Activated CD8-positive, alpha-beta T cell treated with anti-CD3 and anti-CD28 coated beads, Interleukin-2, amount 10 ng/mL, durations not matched to agents 7 days and 5 days (primary cell): ENCODE measurements at regions of chr4 and their contacts with region 1.

Region 1: DNA sequence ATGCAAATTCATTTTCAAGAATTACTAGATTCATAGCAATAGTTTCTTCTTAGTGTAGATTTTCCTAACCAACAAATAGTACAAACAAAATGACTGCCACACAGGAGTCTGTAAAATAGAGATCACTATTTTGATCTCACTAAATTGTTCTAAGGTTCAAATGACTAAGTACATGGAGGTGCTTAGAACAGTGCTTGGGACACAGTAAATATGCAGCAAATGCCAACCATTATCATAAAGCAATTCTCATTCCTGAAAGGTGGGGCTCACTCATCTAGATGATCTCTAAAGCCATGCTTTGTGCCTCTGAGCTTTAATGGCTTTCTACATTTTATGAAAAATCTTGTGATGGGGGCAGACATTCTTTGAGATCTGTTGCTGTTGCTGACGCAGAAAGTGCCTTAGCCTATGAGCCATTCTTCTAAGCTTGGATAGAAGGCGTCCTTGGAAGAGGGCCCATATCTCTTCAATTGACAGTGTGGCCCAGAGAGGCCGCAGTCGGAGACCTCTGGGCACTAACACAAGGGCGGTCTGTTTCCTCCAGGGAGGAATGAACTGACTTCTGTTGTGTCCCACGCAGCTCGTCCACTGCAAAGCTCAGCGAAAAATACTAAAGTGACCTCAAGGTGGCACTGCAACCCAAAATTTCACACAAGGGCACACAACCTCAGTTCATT is 23.5 kb downstream of the TLR10 start:
- DNase-seq: peak; percentile 77
- ATAC-seq: peak; percentile 86
- H3K4me3 Mint-ChIP-seq: no peak overlapping the region
- H3K27ac Mint-ChIP-seq: no peak overlapping the region
- H3K4me1 Mint-ChIP-seq: peaks cover 25% of the 10 kb centered on the region
- H3K27me3 Mint-ChIP-seq: no peaks in the 10 kb centered on the region

Region 2: GRCh38 chr4:38782452-38783108 is 23.3 kb after region 1 on chr4 and contains the start of gene TLR10:
- CTCF ChIA-PET with region 1: interaction called, 99 read pairs
- POLR2A ChIA-PET with region 1: interaction called, 6 read pairs
- DNase-seq: peak; percentile 64
- ATAC-seq: peak; percentile 47
- H3K4me3 Mint-ChIP-seq: no peak within 1 kb of the TSS
- H3K27ac Mint-ChIP-seq: no peak within 1 kb of the TSS
- H3K4me1 Mint-ChIP-seq: peaks cover 6% of the 10 kb centered on the region
- H3K27me3 Mint-ChIP-seq: peaks cover 5% of the 10 kb centered on the region
- total RNA-seq, gene TLR10: 0.08 TPM in 1 of 2 experiments, not detected in the other

Region 3: GRCh38 chr4:38804654-38805295 is 45.5 kb after region 1 on chr4 and contains the start of gene TLR1:
- CTCF ChIA-PET with region 1: interaction called, 72 read pairs
- POLR2A ChIA-PET with region 1: interaction called, 4 read pairs
- DNase-seq: peak; percentile 32
- ATAC-seq: peak; percentile 78
- H3K4me3 Mint-ChIP-seq: peak within 1 kb of the TSS; percentile 76
- H3K27ac Mint-ChIP-seq: peak within 1 kb of the TSS; percentile 84
- H3K4me1 Mint-ChIP-seq: peaks cover 25% of the 10 kb centered on the region
- H3K27me3 Mint-ChIP-seq: no peaks in the 10 kb centered on the region
- total RNA-seq, gene TLR1: 8.1 to 9.6 TPM

Region 4: GRCh38 chr4:38856524-38857337 is 97.5 kb after region 1 on chr4 and contains the start of gene TLR6:
- CTCF ChIA-PET with region 1: interaction called, 90 read pairs
- POLR2A ChIA-PET with region 1: interaction called, 3 read pairs
- DNase-seq: peak; percentile 88
- ATAC-seq: peak; percentile 56
- H3K4me3 Mint-ChIP-seq: peak within 1 kb of the TSS; percentile 83
- H3K27ac Mint-ChIP-seq: peak within 1 kb of the TSS; percentile 95
- H3K4me1 Mint-ChIP-seq: peaks cover 42% of the 10 kb centered on the region
- H3K27me3 Mint-ChIP-seq: peaks cover 5% of the 10 kb centered on the region
- total RNA-seq, gene TLR6: 3.1 to 3.2 TPM

Region 5: DNA sequence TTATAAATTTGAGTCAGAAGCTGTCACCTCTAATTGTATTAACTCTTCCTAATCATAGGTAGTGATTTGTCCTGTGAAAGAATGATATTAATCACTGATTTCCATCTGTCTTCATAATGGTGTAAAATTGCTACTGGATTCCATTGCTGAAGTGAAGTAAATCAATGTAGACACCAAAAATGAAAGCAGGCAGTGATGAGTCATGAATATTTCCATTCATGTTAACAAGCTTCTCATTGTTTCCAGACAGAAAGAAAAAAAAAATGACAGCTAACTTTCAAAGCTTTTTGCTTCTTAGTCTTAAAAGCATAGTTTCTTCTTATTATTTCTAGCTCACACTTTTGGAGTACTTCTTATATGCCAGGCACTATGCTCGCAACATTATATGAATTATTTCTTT is 129.9 kb after region 1 on chr4:
- CTCF ChIA-PET with region 1: interaction called, 19 read pairs
- POLR2A ChIA-PET with region 1: no interaction called
- DNase-seq: no peak
- ATAC-seq: peak; percentile 60
- H3K4me3 Mint-ChIP-seq: peak overlapping the region; percentile 16
- H3K27ac Mint-ChIP-seq: peak overlapping the region; percentile 33
- H3K4me1 Mint-ChIP-seq: peaks cover 16% of the 10 kb centered on the region
- H3K27me3 Mint-ChIP-seq: no peaks in the 10 kb centered on the region

Region 6: DNA sequence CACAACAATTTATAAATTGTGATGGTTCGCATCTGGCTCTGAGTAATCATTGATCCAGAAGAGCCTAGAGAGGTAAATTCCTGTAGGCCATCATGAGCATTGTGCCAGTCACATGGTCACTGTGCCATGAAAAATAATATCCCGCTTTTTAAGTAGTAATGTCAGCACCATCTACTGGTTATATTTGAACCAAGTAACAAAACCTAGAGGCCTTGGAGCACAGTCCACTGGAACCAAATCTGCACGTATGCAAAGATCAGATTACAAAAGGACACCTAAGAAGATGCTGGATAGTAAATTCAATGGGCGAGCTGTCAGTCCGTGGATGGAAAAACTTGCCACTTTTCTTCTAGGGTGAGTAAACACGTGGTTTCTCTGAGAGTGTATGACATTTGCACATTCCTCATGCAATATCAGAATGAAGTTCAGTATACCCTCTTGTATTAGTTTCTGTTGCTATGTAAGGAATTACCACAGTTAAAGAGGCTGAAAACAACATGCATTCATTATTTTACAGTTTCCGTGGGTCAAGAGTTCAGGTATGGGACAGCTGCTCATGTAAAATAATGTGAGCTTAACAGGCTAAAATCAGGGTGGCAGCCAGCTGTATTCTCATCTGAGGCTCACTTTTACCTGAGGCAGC is 135.2 kb after region 1 on chr4:
- CTCF ChIA-PET with region 1: interaction called, 19 read pairs
- POLR2A ChIA-PET with region 1: no interaction called
- DNase-seq: no peak
- ATAC-seq: no peak
- H3K4me3 Mint-ChIP-seq: no peak overlapping the region
- H3K27ac Mint-ChIP-seq: no peak overlapping the region
- H3K4me1 Mint-ChIP-seq: peaks cover 6% of the 10 kb centered on the region
- H3K27me3 Mint-ChIP-seq: peaks cover 8% of the 10 kb centered on the region

Region 7: GRCh38 chr4:39134683-39135319 is 375.6 kb after region 1 on chr4:
- CTCF ChIA-PET with region 1: interaction called, 14 read pairs
- POLR2A ChIA-PET with region 1: no interaction called
- DNase-seq: no peak
- ATAC-seq: no peak
- H3K4me3 Mint-ChIP-seq: no peak overlapping the region
- H3K27ac Mint-ChIP-seq: no peak overlapping the region
- H3K4me1 Mint-ChIP-seq: peaks cover 11% of the 10 kb centered on the region
- H3K27me3 Mint-ChIP-seq: no peaks in the 10 kb centered on the region